Activated CD8-positive, alpha-beta memory T cell treated with anti-CD3 and anti-CD28 coated beads, Interleukin-2, amount 10 ng/mL, durations not matched to agents 7 days and 5 days (primary cell): ENCODE measurements at regions of chr1 and their contacts with region 1.

Region 1: DNA sequence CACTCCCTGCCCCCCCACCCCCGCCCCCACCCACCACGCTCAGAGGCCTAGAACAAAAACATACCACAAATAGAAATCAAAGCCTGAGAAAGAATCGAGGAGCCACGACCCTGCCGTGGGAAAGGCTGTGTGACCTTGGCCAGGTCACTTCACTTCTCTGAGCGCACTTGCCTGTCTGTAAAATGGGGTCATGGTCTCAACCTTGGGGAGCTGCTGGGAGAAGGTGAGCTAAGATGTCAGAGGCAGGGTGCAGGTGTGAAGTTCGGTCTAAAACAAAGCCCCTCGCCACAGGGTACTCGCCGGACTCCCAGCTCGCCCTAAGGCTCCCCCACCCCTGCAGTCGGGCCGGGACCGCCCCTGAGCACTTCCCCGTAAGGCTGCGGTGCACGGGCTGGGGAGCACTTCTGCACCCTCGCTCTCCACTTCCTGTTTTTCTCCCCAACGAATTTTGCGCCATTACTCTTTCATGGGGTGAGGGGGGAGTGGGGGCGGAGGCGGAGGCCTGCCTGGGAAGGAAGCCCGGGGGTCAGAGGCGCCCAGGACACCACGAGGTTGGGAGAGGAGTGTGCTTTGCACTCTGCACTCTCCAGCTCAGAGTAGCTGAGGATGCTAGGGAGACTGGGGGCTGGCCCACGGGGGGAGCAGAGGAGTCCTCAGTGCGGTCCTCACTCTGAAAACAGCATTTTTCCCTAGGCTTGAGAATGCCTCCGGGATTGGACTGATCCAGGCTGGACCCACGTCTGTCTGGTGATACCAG is 21.9 kb upstream of the PIK3CD start:
- DNase-seq: peak; percentile 90
- ATAC-seq: peak; percentile 43
- H3K4me3 Mint-ChIP-seq: peak overlapping the region; percentile 100
- H3K27ac Mint-ChIP-seq: peak overlapping the region; percentile 93
- H3K4me1 Mint-ChIP-seq: peaks cover 66% of the 10 kb centered on the region
- H3K27me3 Mint-ChIP-seq: no peaks in the 10 kb centered on the region

Region 2: DNA sequence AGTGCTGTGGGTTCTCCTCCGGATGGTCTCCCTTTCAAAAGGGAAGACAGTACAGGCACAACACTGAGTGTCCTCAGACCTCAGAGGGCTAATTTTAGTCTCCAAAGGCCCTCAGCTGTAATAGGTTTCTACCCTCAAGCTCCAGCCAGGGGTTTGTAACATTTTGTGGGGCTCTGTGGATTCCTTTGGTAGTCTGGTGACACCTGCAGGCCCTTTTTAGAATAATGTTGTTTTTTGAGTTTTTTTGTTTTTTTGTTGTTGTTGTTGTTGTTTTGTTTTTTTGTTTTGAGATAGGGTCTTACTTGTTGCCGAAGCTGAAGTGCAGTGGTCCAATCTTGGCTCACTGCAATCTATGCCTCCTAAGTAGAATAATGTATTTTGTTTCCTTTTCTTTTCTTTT is 55.9 kb before region 1 on chr1:
- CTCF ChIA-PET with region 1: no interaction called
- DNase-seq: no peak
- ATAC-seq: no peak
- H3K4me3 Mint-ChIP-seq: no peak overlapping the region
- H3K27ac Mint-ChIP-seq: no peak overlapping the region
- H3K4me1 Mint-ChIP-seq: no peaks in the 10 kb centered on the region
- H3K27me3 Mint-ChIP-seq: no peaks in the 10 kb centered on the region

Region 3: DNA sequence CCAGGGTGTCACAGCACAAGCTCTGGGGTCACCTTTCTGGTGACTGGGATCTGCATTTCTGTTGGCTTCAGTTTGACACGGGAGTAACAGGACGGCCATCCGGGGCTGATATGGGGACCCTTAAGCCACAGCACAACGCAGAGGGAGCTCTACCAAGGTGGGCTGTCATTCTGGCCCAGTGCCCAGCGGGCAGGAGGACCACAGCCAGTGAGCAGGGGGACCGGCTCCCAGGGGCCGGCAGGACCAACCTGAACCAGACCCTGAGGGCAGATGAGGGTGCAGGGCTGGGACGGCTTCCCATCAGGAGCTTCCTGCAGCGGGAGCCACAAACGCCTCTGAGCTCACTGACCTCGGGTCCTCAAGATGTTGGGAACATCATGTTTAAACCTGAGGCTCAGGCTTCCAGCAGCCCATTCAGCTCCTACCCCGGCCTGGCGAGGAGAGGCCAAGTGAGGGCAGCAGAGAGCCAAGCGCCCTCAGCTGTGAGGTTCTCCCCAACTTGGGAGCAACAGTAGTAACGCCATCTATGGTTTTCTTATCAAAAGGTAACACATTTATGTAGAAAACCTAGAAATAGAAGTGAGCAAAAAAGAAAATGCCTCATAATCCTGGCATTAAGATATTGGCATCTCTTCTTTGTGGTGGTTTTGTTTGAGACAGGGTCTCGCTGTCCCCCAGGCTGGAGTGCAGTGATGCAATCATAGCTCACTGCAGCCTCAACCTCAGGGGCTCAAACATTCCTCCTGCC is 14.1 kb before region 1 on chr1:
- CTCF ChIA-PET with region 1: interaction called, 48 read pairs
- DNase-seq: peak; percentile 71
- ATAC-seq: peak; percentile 81
- H3K4me3 Mint-ChIP-seq: no peak overlapping the region
- H3K27ac Mint-ChIP-seq: no peak overlapping the region
- H3K4me1 Mint-ChIP-seq: no peaks in the 10 kb centered on the region
- H3K27me3 Mint-ChIP-seq: peaks cover 7% of the 10 kb centered on the region

Region 4: DNA sequence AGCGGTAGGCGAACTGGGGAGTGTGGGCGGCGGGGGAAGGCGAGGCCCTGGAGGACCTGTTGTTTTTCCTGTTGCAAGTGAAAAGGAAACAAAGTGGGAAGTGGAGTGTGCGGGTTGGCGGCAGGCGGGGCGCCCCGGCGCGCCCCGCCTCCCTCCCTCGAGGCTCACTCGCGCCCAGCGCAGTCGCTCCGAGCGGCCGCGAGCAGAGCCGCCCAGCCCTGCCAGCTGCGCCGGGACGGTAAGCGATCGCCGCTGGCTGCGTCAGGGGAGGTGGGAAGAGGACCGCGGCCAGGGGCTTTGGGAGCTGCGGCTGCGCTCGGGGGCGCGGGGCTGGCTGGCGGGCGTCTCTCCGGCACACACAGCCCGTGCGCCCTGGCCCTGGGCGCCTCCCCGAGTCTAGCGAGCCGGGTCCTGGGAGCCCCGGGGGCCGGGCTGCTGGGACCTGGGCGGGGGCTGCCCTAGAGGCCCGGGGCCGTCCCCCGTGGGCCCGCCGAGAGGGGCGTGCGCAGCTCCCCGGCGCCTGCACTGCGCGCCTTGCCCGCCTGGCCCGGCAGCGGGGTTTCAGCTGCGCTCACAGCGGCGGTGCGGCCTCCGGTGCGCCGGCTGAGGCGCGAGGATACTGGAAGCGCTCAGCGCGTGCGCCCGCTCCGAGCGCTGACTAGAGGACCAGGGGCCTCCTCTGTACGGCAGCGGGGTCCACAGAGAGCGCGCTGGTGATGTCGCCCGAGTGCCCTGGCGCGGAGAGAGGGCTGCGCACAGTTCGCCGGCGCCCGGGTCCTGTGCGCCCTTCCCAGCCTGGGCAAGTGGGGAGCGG is 22.1 kb after region 1 on chr1 and contains the start of gene PIK3CD:
- CTCF ChIA-PET with region 1: interaction called, 224 read pairs
- DNase-seq: peak; percentile 66
- ATAC-seq: peak; percentile 59
- H3K4me3 Mint-ChIP-seq: peak within 1 kb of the TSS; percentile 97
- H3K27ac Mint-ChIP-seq: peak within 1 kb of the TSS; percentile 97
- H3K4me1 Mint-ChIP-seq: peaks cover 46% of the 10 kb centered on the region
- H3K27me3 Mint-ChIP-seq: no peaks in the 10 kb centered on the region
- total RNA-seq, gene PIK3CD: 256 to 261 TPM

Region 5: DNA sequence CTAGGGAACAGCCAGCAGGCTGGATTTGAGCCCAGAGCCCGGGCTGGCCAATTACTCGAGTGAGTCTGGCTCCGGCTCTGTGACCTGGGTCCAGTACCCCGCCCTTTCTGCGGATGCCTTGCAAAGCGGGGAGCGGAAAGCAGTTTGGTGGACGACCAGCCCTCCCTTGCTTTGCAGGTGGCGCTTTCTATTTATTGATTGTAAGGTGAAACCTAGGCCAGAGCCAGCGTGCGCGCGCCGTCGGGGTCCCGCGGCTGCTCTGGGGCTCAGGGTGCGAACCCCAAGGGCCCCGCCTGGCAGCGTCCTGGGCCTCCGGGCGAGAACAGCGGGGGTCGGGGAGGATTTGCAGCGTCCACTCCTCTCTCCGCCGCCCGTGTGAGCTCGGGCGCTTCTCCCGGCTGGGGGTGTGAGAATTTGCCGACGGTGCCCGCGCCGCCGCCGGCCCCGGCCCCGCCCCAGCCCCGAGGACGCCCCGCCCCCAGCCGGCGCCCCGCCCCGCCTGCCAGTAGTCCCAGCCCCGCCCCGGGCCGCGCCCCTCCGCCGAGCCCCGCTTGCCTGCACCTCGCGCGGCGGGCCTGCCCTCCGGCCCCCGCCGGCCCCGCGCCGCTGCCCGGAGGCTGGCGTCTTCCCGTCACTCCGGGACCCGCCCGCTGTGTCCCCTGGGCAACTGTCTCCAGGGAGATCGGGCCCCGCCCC is 59.5 kb after region 1 on chr1:
- CTCF ChIA-PET with region 1: interaction called, 39 read pairs
- DNase-seq: peak; percentile 86
- ATAC-seq: peak; percentile 84
- H3K4me3 Mint-ChIP-seq: peak overlapping the region; percentile 70
- H3K27ac Mint-ChIP-seq: peak overlapping the region; percentile 85
- H3K4me1 Mint-ChIP-seq: peaks cover 68% of the 10 kb centered on the region
- H3K27me3 Mint-ChIP-seq: no peaks in the 10 kb centered on the region

Region 6: GRCh38 chr1:9724706-9725476 is 95.3 kb after region 1 on chr1:
- CTCF ChIA-PET with region 1: interaction called, 150 read pairs
- DNase-seq: peak; percentile 79
- ATAC-seq: peak; percentile 62
- H3K4me3 Mint-ChIP-seq: no peak overlapping the region
- H3K27ac Mint-ChIP-seq: peak overlapping the region; percentile 72
- H3K4me1 Mint-ChIP-seq: peaks cover 70% of the 10 kb centered on the region
- H3K27me3 Mint-ChIP-seq: no peaks in the 10 kb centered on the region

Region 7: DNA sequence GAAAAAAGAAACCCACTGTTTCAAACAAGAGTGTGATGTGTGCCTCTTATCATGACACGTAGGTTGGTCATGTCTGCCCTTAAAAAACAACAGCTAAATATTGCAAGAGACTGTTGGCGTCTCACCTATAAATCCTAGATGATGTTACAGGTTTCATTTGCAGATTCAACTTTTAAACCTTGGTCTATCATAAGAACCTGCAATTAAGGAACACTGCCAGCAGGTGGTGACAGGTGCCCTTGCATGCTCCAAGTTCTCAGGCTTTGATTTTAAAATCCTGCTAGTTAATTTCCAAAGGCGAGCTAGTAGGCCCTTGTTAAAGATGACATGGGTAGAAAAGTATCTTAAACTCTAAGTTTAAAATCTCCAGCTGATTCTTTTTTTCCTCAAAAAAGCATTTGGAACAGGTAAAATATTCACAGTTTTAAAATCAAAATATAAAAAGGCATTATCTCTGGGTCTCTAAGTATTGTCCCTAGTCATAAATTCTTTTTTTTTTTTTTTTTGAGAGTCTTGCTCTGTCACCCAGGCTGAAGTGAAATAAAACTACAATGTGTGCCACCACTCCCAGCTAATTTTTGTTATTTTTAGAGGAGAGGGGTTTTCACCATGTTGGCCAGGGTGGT is 155.0 kb after region 1 on chr1:
- CTCF ChIA-PET with region 1: interaction called, 28 read pairs
- DNase-seq: peak; percentile 81
- ATAC-seq: peak; percentile 27
- H3K4me3 Mint-ChIP-seq: no peak overlapping the region
- H3K27ac Mint-ChIP-seq: peak overlapping the region; percentile 54
- H3K4me1 Mint-ChIP-seq: peaks cover 47% of the 10 kb centered on the region
- H3K27me3 Mint-ChIP-seq: no peaks in the 10 kb centered on the region